ENCODE measurements at regions of chr3 and their contacts with region 1.

Region 1: GRCh38 chr3:193780810-193781472 is 187.9 kb downstream of the OPA1 start:
- DNase-seq: no peak
- ATAC-seq: peak; percentile 79
- H3K4me3 ChIP-seq: no peak overlapping the region
- H3K27ac ChIP-seq: no peak overlapping the region
- H3K4me1 ChIP-seq: peaks cover 28 to 40% of the 10 kb centered on the region in 2 experiments
- H3K27me3 ChIP-seq: peaks cover 19% of the 10 kb centered on the region; the same call in 1 of the 2 replicates
- CTCF ChIP-seq: peak; percentile 80 to 93 (median 85)
- POLR2A ChIP-seq: no peak
- RAD21 ChIP-seq: peak; percentile 95

Region 2: DNA sequence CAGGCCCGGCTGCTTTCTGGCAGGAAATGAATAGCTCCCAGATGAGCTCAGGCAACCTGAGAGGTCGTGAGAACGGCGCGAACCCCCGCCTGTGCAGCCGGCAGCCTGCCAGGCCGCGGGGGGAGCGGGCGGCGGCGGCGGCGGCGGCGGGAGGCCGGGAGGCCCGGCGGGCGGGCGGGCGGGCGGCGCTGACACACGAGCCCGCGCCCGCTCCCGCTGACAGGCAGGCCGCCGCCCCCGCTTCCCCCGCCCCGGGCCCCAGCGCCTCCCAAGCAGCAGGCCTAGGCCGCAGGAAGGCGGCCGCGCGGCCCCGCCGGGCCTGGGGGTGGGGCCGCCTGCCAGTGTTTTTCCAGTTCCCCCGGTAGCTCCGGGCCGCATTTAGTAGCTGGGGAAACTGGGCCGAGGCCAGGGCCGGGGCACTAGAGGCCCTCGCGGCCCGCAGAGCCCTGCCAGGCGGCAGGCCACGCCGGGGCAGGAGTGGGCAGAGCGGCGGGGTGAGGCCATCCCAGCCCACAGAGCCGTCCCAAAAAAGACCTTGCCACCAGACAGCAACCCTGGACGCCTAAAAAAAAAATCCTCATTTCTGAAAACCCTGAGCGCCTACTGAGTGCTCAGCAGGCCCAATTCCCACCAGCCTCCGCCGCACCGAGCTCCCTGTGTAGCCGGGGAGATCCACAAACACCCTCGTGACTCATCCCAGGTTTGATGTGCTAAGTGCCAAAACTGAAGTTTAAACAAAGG is 360.6 kb after region 1 on chr3:
- CTCF ChIA-PET with region 1: interaction called, 46 read pairs
- POLR2A ChIA-PET with region 1: interaction called, 10 read pairs
- RAD21 ChIA-PET with region 1: interaction called, 4 to 8 read pairs
- intact Hi-C with region 1: loop called (anchors 2 kb)
- DNase-seq: peak; percentile 82
- ATAC-seq: peak; percentile 64
- H3K4me3 ChIP-seq: peak overlapping the region; percentile 24 to 39; a peak in 3 of 4 replicates
- H3K27ac ChIP-seq: peak overlapping the region; percentile 91
- H3K4me1 ChIP-seq: peaks cover 52 to 66% of the 10 kb centered on the region in 2 experiments
- H3K27me3 ChIP-seq: no peaks in the 10 kb centered on the region
- CTCF ChIP-seq: no peak
- POLR2A ChIP-seq: no peak
- RAD21 ChIP-seq: no peak

Region 3: DNA sequence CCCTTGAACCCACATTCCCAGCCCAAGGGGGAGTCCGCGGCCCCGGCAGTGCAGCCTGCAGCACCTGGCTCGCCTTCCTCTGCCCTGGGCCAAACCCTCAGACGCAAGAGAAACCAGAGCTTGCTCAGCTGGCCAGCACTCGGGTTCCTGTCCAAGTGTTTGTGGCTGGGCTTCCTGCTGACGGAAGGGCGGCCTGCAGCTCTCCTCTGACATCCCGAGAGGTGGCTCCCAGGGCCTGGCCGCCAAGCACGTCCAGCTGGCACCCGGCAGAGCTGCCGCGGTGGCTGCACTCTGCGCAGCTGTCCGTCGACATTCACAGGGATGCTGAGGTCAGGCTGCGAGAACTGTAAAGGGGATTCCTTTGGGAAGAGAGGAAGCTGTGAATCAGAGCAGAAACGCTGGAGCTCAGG is 484.5 kb after region 1 on chr3:
- CTCF ChIA-PET with region 1: interaction called, 12 read pairs
- POLR2A ChIA-PET with region 1: no interaction called
- RAD21 ChIA-PET with region 1: interaction called in 1 of 2 experiments, 3 read pairs
- intact Hi-C with region 1: no loop called
- DNase-seq: no peak
- ATAC-seq: no peak
- H3K4me3 ChIP-seq: no peak overlapping the region
- H3K27ac ChIP-seq: no peak overlapping the region
- H3K4me1 ChIP-seq: peaks cover 28 to 34% of the 10 kb centered on the region in 2 experiments
- H3K27me3 ChIP-seq: no peaks in the 10 kb centered on the region
- CTCF ChIP-seq: no peak
- POLR2A ChIP-seq: no peak
- RAD21 ChIP-seq: no peak

Region 4: DNA sequence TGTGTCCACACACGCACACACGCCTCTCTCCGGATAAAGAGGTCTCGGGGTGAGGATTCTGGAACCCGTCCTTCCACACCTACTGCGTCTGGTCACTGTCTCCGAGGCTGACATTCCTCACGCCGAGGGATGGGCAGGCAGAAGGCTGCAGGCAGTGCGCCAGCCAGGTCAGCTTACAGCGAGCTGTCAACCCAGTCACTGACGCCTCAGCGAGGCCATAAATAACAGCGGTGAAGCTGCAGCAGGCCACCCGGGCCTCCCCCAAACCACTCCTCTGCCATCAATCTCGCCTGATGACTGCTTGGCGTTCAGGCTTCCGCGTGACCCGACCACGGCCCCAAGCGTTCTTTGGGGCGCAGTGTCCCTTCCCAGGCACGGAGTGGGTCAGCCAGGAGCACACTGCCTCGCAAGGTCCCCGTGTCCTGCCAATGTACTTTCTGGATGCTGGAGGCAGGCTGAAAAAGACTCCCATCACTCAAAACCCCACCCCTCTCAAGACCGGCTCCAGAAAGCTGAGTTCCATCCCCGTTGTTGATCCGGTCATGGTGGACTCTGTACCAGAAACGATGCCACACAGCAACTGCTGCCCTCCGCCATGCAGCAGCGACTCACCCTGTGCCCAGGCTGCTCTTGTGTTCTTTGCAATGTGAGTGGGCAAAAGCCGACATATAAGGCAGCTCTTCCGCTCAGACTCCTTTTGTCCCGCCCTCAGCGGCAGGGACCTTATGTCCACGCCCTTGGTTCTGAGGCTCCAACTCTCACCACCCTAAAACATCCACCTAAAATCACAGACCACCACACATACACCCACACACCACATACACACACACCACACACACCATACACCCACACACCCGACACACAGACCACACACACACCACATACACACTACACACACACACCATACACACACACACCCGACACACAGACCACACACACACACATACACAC is 543.1 kb after region 1 on chr3:
- CTCF ChIA-PET with region 1: interaction called, 21 read pairs
- POLR2A ChIA-PET with region 1: interaction called, 3 read pairs
- RAD21 ChIA-PET with region 1: interaction called in 1 of 2 experiments, 3 read pairs
- intact Hi-C with region 1: no loop called
- DNase-seq: peak; percentile 76
- ATAC-seq: peak; percentile 52
- H3K4me3 ChIP-seq: peak overlapping the region; percentile 44 to 61
- H3K27ac ChIP-seq: peak overlapping the region; percentile 95
- H3K4me1 ChIP-seq: peaks cover 35 to 90% of the 10 kb centered on the region in 2 experiments
- H3K27me3 ChIP-seq: no peaks in the 10 kb centered on the region
- CTCF ChIP-seq: no peak
- POLR2A ChIP-seq: peak; percentile 54
- RAD21 ChIP-seq: no peak

Region 5: DNA sequence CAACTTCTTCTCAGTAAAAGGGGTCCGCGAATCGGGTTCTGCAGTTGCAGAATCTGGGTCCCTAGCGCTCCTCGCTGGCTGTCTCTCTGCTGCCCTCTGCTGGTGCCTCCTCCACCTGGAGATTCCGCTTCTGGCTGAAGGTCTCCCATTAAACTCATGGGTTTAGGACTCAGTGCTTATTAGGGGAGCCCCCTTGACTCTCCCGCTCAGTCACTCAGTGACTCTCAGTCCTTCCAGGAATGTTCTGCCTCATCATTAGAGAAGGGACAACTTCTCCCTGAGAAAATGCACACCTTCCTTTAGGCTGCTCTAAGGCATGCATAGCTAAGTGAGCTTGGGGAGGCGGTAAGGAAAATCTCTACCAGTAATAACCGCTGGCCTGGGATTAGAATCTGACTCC is 563.1 kb after region 1 on chr3:
- CTCF ChIA-PET with region 1: interaction called, 36 read pairs
- POLR2A ChIA-PET with region 1: no interaction called
- RAD21 ChIA-PET with region 1: no interaction called
- intact Hi-C with region 1: no loop called
- DNase-seq: peak; percentile 28
- ATAC-seq: peak; percentile 88
- H3K4me3 ChIP-seq: no peak overlapping the region
- H3K27ac ChIP-seq: no peak overlapping the region
- H3K4me1 ChIP-seq: no peaks in the 10 kb centered on the region
- H3K27me3 ChIP-seq: no peaks in the 10 kb centered on the region
- CTCF ChIP-seq: peak; percentile 79 to 98 (median 97)
- POLR2A ChIP-seq: no peak
- RAD21 ChIP-seq: peak; percentile 85

Region 6: GRCh38 chr3:194404365-194405140 is 623.6 kb after region 1 on chr3:
- CTCF ChIA-PET with region 1: interaction called, 3 read pairs
- POLR2A ChIA-PET with region 1: no interaction called
- RAD21 ChIA-PET with region 1: no interaction called
- intact Hi-C with region 1: loop called (anchors 2 kb)
- DNase-seq: peak; percentile 49
- ATAC-seq: peak; percentile 69
- H3K4me3 ChIP-seq: no peak overlapping the region
- H3K27ac ChIP-seq: no peak overlapping the region
- H3K4me1 ChIP-seq: no peaks in the 10 kb centered on the region; a peak in 1 of 4 replicates
- H3K27me3 ChIP-seq: no peaks in the 10 kb centered on the region
- CTCF ChIP-seq: peak; percentile 50 to 81 (median 64)
- POLR2A ChIP-seq: no peak
- RAD21 ChIP-seq: peak; percentile 74